Naive thymus-derived CD8-positive, alpha-beta T cell (primary cell): ENCODE measurements at regions of chr11 and their contacts with region 1.

Region 1: GRCh38 chr11:66069715-66070603 is at the start of gene PACS1:
- DNase-seq: peak; percentile 71 to 91 (median 81)
- ATAC-seq: peak; percentile 70 to 71
- H3K4me3 Mint-ChIP-seq: peak within 1 kb of the TSS; percentile 92 to 99 (median 97)
- H3K27ac Mint-ChIP-seq: peak within 1 kb of the TSS; percentile 91 to 99 (median 98)
- H3K4me1 Mint-ChIP-seq: peaks cover 35 to 74% (median 63%) of the 10 kb centered on the region in 4 donors
- H3K27me3 Mint-ChIP-seq: no peaks in the 10 kb centered on the region
- polyA plus RNA-seq, gene PACS1: 35.9 to 98.8 (median 49.9) TPM

Region 2: DNA sequence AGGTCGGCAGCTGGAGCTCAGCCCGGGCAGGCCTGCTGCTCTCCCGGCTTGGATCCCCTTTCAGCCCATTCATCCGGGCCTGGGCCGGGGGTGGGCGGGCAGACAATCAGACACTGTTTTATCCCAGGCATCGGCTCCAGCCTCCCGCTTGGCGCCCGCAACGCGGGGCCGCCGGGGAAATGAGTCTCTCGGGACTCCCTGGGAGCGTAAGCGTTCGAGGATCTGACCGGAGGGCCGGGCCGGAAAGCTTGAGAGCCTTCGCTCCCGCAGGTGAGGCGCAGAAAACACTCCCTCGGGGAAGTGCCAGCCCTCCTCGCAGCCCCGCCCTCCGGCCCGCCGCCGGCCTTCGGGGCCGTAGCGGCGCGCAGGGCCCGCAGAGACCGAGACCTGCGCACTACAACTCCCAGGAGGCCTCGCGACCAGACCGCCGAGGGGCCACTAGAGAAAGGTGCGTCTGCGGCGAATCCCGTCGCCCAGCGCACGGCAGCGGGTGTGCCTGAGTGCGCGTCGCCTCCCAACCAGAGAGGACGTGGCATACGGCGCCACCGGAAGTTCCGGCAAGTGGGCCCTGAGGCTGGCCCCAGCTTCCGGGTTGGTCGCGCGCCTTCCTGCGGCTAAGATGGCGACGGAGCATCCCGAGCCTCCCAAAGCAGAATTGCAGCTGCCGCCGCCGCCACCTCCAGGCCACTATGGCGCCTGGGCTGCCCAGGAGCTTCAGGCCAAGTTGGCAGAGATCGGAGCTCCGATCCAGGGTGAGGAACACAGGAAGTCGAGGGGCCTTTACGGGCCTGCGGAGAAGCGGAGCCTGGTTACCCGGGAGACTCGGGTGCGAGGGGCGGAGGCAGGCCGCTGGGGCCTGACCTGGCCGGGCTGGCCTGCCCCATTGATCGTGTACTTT is 17.9 kb before region 1 on chr11 and contains the start of gene SF3B2:
- POLR2A ChIA-PET with region 1: interaction called, 26 read pairs
- DNase-seq: peak; percentile 88 to 97 (median 94)
- ATAC-seq: peak; percentile 95 to 97
- H3K4me3 Mint-ChIP-seq: peak within 1 kb of the TSS; percentile 98 to 100 (median 99)
- H3K27ac Mint-ChIP-seq: peak within 1 kb of the TSS; percentile 95 to 99 (median 98)
- H3K4me1 Mint-ChIP-seq: peaks cover 19 to 44% (median 37%) of the 10 kb centered on the region in 4 donors
- H3K27me3 Mint-ChIP-seq: peaks cover 0 to 5% (median 0%) of the 10 kb centered on the region in 5 donors
- polyA plus RNA-seq, gene SF3B2: 70.3 to 115 (median 91.6) TPM

Region 3: GRCh38 chr11:66100272-66101065 is 30.5 kb after region 1 on chr11:
- POLR2A ChIA-PET with region 1: interaction called, 42 read pairs
- DNase-seq: peak; percentile 48 to 85 (median 70)
- ATAC-seq: peak; percentile 94 to 98
- H3K4me3 Mint-ChIP-seq: peak overlapping the region; percentile 75 to 90 (median 86)
- H3K27ac Mint-ChIP-seq: peak overlapping the region; percentile 91 to 98 (median 95)
- H3K4me1 Mint-ChIP-seq: peaks cover 41 to 81% (median 72%) of the 10 kb centered on the region in 4 donors
- H3K27me3 Mint-ChIP-seq: no peaks in the 10 kb centered on the region

Region 4: DNA sequence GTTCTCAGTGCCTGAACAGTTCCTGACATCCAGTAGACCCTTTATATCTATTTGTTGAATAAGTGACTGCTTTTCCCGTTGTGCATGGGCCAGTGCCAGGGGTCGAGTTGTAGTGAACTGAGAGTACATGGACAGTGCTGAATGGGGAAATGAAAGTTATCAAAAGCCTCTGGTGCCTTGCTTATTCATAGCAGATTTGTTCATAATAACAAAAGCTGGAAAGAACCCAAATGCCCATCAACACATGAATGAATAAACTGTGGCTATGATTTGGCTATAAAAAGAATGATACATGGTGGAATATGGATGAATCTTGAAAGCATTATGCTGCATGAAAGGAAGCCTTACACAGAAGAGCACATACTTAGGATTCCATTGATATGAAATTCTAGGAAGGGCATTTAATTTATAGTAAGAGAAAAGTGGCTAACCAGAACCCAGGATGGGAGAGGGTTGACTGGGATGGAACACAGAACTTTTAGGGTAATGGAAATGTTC is 42.7 kb after region 1 on chr11:
- POLR2A ChIA-PET with region 1: interaction called, 89 read pairs
- DNase-seq: no peak
- ATAC-seq: no peak
- H3K4me3 Mint-ChIP-seq: peak overlapping the region in 8 of 10 donors; percentile 41 to 78 (median 69)
- H3K27ac Mint-ChIP-seq: peak overlapping the region; percentile 74 to 96 (median 86)
- H3K4me1 Mint-ChIP-seq: peaks cover 51 to 99% (median 96%) of the 10 kb centered on the region in 4 donors
- H3K27me3 Mint-ChIP-seq: no peaks in the 10 kb centered on the region

Region 5: GRCh38 chr11:66119348-66120133 is 49.6 kb after region 1 on chr11:
- POLR2A ChIA-PET with region 1: interaction called, 89 read pairs
- DNase-seq: no peak
- ATAC-seq: no peak
- H3K4me3 Mint-ChIP-seq: peak overlapping the region in 8 of 10 donors; percentile 20 to 67 (median 54)
- H3K27ac Mint-ChIP-seq: peak overlapping the region; percentile 57 to 93 (median 84)
- H3K4me1 Mint-ChIP-seq: peaks cover 55 to 90% (median 89%) of the 10 kb centered on the region in 4 donors
- H3K27me3 Mint-ChIP-seq: no peaks in the 10 kb centered on the region

Region 6: DNA sequence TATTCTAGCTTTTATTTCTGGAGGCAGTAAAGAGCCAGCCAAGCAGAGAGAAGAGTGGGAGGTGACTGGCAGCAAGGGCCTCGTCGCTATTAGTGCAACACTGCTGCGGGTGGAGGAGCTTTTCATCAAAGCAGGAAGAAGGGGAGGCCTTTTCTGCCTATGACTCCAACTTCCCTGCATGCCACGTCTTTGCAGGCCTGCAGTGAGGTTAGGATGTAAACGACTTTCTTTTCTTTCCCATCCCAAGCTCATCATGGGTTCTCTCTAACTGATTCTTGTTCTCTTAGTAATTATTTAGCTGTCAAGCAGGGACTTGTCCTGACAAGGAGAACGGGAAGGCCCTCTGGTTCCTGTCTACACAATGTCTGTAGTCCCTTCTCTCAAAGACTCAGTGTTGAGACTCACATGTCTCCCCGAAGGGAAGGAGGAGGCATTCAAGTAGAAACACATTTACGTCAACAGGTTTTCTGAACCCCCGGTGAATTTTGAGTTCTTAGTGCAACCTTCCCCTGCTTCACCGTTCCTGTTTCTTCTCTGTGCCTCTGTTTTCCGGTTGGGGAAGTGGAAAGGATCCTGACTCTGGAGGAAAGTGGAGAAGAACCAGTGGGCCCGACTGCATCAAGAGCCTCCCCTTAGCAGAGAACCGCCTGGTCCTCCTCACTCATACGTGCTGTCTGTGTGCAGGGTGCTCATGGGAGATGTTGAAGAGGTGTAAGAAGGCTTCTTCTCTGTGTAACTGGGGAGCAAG is 57.0 kb after region 1 on chr11:
- POLR2A ChIA-PET with region 1: interaction called, 89 read pairs
- DNase-seq: peak; percentile 23 to 75 (median 55)
- ATAC-seq: peak; percentile 92
- H3K4me3 Mint-ChIP-seq: peak overlapping the region; percentile 61 to 89 (median 81)
- H3K27ac Mint-ChIP-seq: peak overlapping the region; percentile 88 to 98 (median 96)
- H3K4me1 Mint-ChIP-seq: peaks cover 44 to 84% (median 83%) of the 10 kb centered on the region in 4 donors
- H3K27me3 Mint-ChIP-seq: no peaks in the 10 kb centered on the region